ENCODE measurements at regions of chr5 and their contacts with region 1.

Region 1: GRCh38 chr5:16626663-16627264 is 10.0 kb upstream of the RETREG1 start:
- DNase-seq: no peak
- H3K4me3 ChIP-seq: no peak overlapping the region
- H3K27ac ChIP-seq: no peak overlapping the region
- H3K4me1 ChIP-seq: no peaks in the 10 kb centered on the region
- H3K27me3 ChIP-seq: peaks cover 72% of the 10 kb centered on the region
- CTCF ChIP-seq: no peak

Region 2: DNA sequence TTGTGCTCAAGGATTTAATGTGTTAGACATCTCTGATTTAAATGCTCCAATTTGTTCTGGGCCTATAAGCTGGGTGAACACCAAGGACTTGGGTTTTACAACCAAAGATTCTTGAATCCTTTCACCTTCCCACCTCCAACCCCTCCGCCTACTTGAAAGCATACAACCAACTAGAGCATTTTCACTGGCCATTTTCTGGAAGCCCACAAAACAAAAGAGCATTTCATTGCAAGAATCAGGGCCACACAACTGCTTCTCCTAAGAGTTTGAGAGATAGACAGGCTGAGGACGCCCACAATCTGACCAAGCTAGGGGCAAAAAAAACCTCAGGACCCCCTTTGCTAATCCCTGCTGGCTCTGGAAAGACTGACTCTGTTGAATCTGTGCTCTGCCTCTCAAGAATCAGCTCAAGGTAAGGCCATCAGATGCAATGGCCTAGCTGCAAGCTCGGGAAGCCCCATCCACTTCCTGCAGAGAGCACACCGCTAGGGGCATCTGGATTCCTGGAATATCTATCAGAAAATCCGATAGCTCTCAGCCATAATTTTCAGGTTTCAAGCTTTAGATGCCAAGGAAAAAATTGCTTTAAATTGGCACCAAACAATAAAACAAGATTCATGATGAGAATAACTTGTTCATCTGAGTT is 67.7 kb before region 1 on chr5:
- CTCF ChIA-PET with region 1: no interaction called
- POLR2A ChIA-PET with region 1: interaction called, 10 read pairs
- intact Hi-C with region 1: no loop called
- DNase-seq: no peak
- H3K4me3 ChIP-seq: no peak overlapping the region
- H3K27ac ChIP-seq: no peak overlapping the region
- H3K4me1 ChIP-seq: no peaks in the 10 kb centered on the region
- H3K27me3 ChIP-seq: peaks cover 3% of the 10 kb centered on the region; the same call in 1 of the 2 replicates
- CTCF ChIP-seq: no peak

Measured in PC-9 (cell line).